Panc1 (cell line): ENCODE measurements at regions of chr3 and their contacts with region 1.

Region 1: DNA sequence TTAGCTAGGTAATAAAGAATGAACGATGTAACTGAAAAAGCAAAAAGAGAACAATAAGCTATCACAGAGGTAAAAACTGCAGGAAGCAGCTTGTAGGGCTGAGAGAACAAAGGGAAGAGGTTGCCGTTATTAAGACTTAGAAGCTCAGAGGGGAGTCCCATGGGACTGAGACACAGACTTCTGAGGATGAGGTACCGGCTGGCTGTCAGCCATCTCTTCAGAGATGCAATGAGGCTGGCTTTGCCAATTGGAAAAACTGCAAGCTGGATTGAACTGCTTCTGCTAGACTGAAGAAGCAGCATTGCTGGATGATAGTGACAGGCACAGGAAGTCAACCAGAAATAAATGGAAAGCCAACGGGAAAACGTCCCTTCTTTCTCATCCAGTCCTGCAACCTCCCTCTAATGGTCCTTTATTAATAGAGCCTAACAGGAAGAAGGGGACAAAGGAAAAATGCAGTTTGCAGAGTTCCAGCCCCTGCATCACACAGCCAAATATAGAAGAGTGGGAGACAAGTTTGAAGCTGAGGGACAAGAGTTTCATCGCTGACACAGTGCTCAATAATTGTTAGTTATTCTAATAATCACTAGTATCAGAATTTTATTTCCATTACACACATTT is 21.1 kb upstream of the KLHL6 start:
- DNase-seq: no peak
- ATAC-seq: no peak
- H3K4me3 ChIP-seq: no peak overlapping the region
- H3K27ac ChIP-seq: no peak overlapping the region
- H3K4me1 ChIP-seq: no peaks in the 10 kb centered on the region
- H3K27me3 ChIP-seq: peaks cover 23% of the 10 kb centered on the region
- CTCF ChIP-seq: no peak

Region 2: DNA sequence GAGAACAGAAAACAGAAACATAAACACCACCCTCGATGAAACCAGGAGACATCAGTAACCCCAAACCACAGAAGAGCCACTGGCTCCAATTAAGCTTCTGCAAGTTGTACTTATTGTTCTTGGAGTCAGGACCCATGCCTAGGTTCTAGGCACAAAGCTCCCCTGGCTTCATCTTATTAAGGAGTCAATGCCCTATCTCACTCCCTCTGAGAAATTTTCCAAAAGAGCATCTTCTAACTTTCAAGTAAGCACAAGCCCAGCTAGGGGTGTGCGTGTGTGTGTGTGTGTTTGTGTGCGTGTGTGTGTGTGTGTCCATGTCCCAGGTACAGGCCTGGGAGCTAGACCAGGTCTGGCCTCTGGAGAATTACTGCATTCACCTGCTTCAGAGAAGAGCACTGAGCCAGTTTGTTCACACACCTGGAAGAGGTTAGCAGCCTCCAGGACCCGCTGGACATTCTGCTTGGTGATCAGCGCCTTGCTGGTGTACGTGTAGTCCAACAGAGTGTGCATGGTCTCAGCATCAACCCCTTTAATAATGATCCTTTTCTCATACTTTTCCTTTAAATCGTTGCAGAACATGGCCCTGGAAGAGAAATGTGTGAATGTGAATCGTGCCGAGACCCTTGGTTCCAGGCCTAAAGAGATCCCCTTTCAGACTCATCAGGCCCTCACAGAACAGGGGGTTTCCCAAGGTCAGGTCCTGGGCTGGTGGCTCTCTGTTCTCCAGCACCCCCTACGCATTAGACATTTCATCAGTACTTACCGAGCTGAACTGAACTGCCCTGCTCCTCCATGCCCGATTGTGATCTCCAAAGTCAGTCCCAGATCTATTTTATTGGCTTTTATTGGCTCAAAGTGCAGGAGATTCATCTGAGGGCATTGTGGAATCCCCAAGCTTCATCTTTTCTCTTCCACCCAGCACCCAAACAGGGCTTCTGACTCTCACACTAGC is 48.9 kb before region 1 on chr3:
- CTCF ChIA-PET with region 1: no interaction called
- POLR2A ChIA-PET with region 1: interaction called, 10 read pairs
- in situ Hi-C with region 1: no loop called
- intact Hi-C with region 1: no loop called
- DNase-seq: no peak
- ATAC-seq: no peak; the same call in 1 of the 2 replicates
- H3K4me3 ChIP-seq: no peak overlapping the region
- H3K27ac ChIP-seq: no peak overlapping the region
- H3K4me1 ChIP-seq: no peaks in the 10 kb centered on the region
- H3K27me3 ChIP-seq: no peaks in the 10 kb centered on the region
- CTCF ChIP-seq: no peak

Region 3: DNA sequence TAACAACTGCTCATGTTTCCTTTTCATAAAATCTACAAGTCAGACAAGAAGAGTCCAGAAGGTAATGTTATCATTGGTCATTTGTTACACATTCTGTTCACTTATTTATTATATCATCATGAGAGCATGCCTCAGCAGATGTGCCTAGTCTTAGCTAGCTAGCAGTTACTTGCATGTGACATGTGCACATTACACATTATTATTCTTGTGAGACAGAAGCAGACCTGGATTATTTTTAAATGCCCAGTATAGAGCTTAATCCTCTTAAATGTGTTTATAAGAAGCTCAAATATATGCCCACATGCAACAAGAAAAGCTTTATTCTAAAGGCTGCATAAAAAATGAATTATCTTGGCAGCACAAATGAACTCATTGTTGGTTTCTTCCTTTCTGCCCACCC is 133.6 kb after region 1 on chr3:
- CTCF ChIA-PET with region 1: no interaction called
- POLR2A ChIA-PET with region 1: no interaction called
- in situ Hi-C with region 1: no loop called
- intact Hi-C with region 1: no loop called
- DNase-seq: no peak
- ATAC-seq: no peak
- H3K4me3 ChIP-seq: no peak overlapping the region
- H3K27ac ChIP-seq: no peak overlapping the region
- H3K4me1 ChIP-seq: no peaks in the 10 kb centered on the region
- H3K27me3 ChIP-seq: no peaks in the 10 kb centered on the region
- CTCF ChIP-seq: no peak